Thyroid gland (tissue), 4 donors: ENCODE measurements at regions of chr1 and their contacts with region 1.

Region 1: GRCh38 chr1:46724991-46725735 is 6.2 kb upstream of the EFCAB14 start:
- DNase-seq: peak; percentile 72 to 75
- H3K4me3 ChIP-seq: no peak overlapping the region
- H3K27ac ChIP-seq: no peak overlapping the region
- H3K4me1 ChIP-seq: peaks cover 0 to 3% of the 10 kb centered on the region in 2 donors
- H3K27me3 ChIP-seq: no peaks in the 10 kb centered on the region
- CTCF ChIP-seq: peak; percentile 22 to 87 (median 76)
- POLR2A ChIP-seq: no peak

Region 2: GRCh38 chr1:46477153-46477929 is 247.8 kb before region 1 on chr1:
- intact Hi-C with region 1: loop called (anchors 10 kb)
- DNase-seq: peak; percentile 72 to 73
- H3K4me3 ChIP-seq: no peak overlapping the region
- H3K27ac ChIP-seq: no peak overlapping the region
- H3K4me1 ChIP-seq: no peaks in the 10 kb centered on the region
- H3K27me3 ChIP-seq: no peaks in the 10 kb centered on the region
- CTCF ChIP-seq: peak; percentile 84 to 97 (median 92)
- POLR2A ChIP-seq: no peak

Region 3: DNA sequence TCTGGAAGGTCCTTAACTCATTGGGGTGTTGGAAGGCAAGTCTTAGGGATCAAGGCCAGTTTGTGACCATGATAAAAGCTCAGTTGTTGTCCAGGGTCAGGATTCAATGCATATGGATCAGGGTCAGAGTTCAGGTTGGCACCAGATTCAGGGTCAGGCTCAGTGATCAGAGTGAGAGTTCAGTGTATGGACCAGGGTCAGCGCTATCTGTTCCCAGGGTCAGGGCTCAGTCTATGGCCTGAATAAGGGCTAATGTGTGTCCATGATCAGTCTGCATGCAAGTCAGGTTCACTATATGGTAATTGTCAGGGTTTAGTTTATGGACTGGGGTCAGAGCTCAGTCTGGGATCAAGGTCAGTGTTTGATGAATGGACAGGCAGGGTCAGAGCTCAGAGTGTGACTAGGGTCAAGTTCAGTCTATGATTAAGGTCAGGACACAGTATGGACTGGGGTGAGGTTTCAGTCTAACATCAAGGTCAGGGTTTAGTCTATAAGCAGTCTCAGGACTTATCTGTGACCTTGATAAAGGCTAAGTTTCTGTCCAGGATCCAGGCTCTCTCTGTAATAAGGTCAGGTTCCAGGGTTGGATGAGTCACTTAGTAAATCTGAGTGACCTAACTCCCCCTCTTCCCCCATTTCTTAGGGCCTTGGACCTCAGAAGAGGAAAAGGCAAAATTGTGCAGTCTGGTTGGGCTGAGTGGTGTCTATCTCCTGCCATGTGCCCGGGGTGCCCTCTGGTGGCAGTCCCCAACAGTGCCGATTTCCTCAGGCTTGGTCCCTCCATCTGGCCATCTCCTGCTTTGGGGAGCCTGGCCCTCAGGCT is 197.5 kb before region 1 on chr1:
- intact Hi-C with region 1: loop called (anchors 5 kb)
- DNase-seq: peak; percentile 86 to 87
- H3K4me3 ChIP-seq: no peak overlapping the region
- H3K27ac ChIP-seq: no peak overlapping the region
- H3K4me1 ChIP-seq: peaks cover 4 to 8% of the 10 kb centered on the region in 2 donors
- H3K27me3 ChIP-seq: no peaks in the 10 kb centered on the region
- CTCF ChIP-seq: peak; percentile 67 to 98 (median 94)
- POLR2A ChIP-seq: no peak

Region 4: DNA sequence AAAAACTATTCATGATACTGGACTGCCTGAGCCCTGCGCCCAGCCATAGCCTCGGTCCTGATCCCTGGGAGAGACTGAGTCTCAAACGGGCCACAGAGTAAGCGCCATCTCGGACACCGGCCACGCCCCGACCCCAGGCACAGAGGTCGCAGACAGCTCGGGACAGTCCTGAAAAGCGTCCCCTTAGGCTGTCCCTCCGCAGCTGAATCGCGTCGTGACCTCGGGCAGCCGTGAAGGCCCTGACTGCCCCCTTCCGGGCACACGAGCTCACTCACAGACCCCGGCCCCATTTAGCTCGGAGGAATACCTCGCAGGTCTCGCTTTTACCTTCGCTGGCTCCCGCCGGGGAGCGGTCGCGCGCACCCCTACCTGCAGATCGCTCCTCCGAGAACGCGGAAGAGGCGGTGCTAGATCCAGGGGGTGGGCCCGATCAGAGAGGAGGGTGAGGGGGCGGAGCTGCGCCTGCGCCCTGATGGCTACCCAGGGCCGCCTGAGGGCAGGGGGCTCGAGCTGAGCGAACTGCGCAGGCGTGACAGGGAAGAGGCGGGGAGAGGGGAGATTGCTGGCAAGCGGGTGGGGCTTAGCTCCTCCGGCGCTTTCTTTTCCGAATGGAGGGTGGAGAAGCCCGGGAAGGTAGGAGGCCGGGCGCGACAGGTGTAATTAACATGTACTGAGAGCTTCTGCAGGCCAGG is 121.2 kb before region 1 on chr1 and contains the start of gene MKNK1:
- intact Hi-C with region 1: loop called (anchors 5 kb)
- DNase-seq: peak; percentile 98 to 99
- H3K4me3 ChIP-seq: peak within 1 kb of the TSS; percentile 54 to 87 (median 83)
- H3K27ac ChIP-seq: peak within 1 kb of the TSS; percentile 27 to 76 (median 66)
- H3K4me1 ChIP-seq: peaks cover 9 to 14% of the 10 kb centered on the region in 2 donors
- H3K27me3 ChIP-seq: no peaks in the 10 kb centered on the region
- CTCF ChIP-seq: no peak
- POLR2A ChIP-seq: peak; percentile 49 to 98
- total RNA-seq, gene MKNK1: 20.8 to 29.6 (median 23.4) TPM

Region 5: DNA sequence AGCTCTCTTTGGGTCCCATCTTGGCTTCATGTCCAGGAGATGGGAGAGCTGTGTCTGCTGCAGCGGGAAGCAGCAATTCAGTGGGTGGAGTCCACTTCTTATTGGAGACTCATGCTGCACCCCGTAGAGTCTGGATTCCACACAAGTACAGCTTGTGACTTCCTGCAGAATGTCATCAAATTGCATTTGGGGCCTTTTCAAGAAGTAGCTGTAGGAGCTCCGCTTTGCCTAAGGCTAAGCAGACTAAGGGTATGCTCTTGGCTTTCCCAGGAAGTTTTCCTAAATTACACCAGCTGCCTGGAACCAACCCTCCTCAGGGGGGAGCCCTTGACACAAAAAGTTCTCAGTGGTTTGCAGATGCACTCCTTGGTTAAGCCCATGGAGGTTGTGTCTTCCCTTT is 102.8 kb before region 1 on chr1:
- intact Hi-C with region 1: loop called (anchors 5 kb)
- DNase-seq: no peak
- H3K4me3 ChIP-seq: no peak overlapping the region
- H3K27ac ChIP-seq: no peak overlapping the region
- H3K4me1 ChIP-seq: peaks cover 0 to 2% of the 10 kb centered on the region in 2 donors
- H3K27me3 ChIP-seq: no peaks in the 10 kb centered on the region
- CTCF ChIP-seq: peak in 1 of 6 experiments; percentile 32
- POLR2A ChIP-seq: no peak